ENCODE measurements at regions of chr1 and their contacts with region 1.

Region 1: DNA sequence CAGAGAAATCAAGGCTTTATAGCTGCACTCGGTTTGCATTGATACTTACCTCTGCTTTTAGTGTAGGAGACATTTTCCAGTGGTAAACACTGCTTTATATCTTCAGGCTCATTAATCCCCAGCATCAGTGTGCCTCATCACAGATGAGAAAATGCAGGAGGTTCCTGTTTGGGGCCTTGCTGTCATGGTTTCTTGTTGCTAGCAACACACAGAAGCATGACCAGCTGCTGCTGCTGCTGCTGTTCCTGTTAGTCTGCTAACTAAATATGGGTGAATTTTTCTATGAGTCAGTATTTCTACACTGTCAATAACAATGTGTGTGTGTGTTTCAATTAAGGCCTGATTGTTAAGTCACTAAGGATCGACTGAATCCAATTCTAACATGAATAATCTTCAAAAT is 85.8 kb upstream of the RGS1 start:
- DNase-seq: no peak
- H3K4me3 ChIP-seq: peak overlapping the region; percentile 24 to 43 (median 29)
- H3K27ac ChIP-seq: peak overlapping the region; percentile 85 to 88 (median 86)
- H3K4me1 ChIP-seq: peaks cover 8 to 66% (median 58%) of the 10 kb centered on the region in 4 donors
- H3K27me3 ChIP-seq: no peaks in the 10 kb centered on the region
- CTCF ChIP-seq: no peak
- EP300 ChIP-seq: no peak
- POLR2A ChIP-seq: no peak

Region 2: GRCh38 chr1:192550922-192551534 is 61.3 kb after region 1 on chr1:
- intact Hi-C with region 1: no loop called
- DNase-seq: no peak
- H3K4me3 ChIP-seq: no peak overlapping the region
- H3K27ac ChIP-seq: no peak overlapping the region
- H3K4me1 ChIP-seq: peaks cover 0 to 17% (median 4%) of the 10 kb centered on the region in 4 donors
- H3K27me3 ChIP-seq: no peaks in the 10 kb centered on the region
- CTCF ChIP-seq: no peak
- EP300 ChIP-seq: no peak
- POLR2A ChIP-seq: no peak

Region 3: GRCh38 chr1:192588546-192588945 is 98.8 kb after region 1 on chr1:
- intact Hi-C with region 1: loop called (anchors 5 kb)
- DNase-seq: no peak
- H3K4me3 ChIP-seq: no peak overlapping the region
- H3K27ac ChIP-seq: peak overlapping the region; percentile 21 to 85 (median 71)
- H3K4me1 ChIP-seq: peaks cover 0 to 41% (median 34%) of the 10 kb centered on the region in 4 donors
- H3K27me3 ChIP-seq: no peaks in the 10 kb centered on the region
- CTCF ChIP-seq: no peak
- EP300 ChIP-seq: no peak
- POLR2A ChIP-seq: no peak

Region 4: GRCh38 chr1:192598589-192598988 is 108.8 kb after region 1 on chr1:
- intact Hi-C with region 1: no loop called
- DNase-seq: no peak
- H3K4me3 ChIP-seq: no peak overlapping the region
- H3K27ac ChIP-seq: no peak overlapping the region
- H3K4me1 ChIP-seq: peaks cover 0 to 20% (median 19%) of the 10 kb centered on the region in 4 donors
- H3K27me3 ChIP-seq: no peaks in the 10 kb centered on the region
- CTCF ChIP-seq: no peak
- EP300 ChIP-seq: no peak
- POLR2A ChIP-seq: no peak

Measured in esophagus muscularis mucosa (tissue), 4 donors.